ENCODE measurements at regions of chr1 and their contacts with region 1.

Region 1: GRCh38 chr1:115337633-115338456 is at the start of gene NGF:
- DNase-seq: peak; percentile 63 to 82
- H3K4me3 ChIP-seq: peak within 1 kb of the TSS; percentile 55 to 83 (median 72)
- H3K27ac ChIP-seq: no peak within 1 kb of the TSS
- H3K4me1 ChIP-seq: peaks cover 0 to 7% (median 0%) of the 10 kb centered on the region in 4 experiments; a peak in 4 of 7 replicates
- H3K27me3 ChIP-seq: peaks cover 7 to 38% (median 29%) of the 10 kb centered on the region in 4 experiments
- CTCF ChIP-seq: no peak
- EP300 ChIP-seq: no peak
- POLR2A ChIP-seq: peak in 1 of 2 experiments; percentile 55; a peak in 1 of 3 replicates
- RAD21 ChIP-seq: no peak
- total RNA-seq, gene NGF: 0.63 TPM in 1 of 2 replicates, not detected in the other

Region 2: GRCh38 chr1:115356356-115356755 is 18.5 kb after region 1 on chr1:
- CTCF ChIA-PET with region 1: interaction called, 13 read pairs
- POLR2A ChIA-PET with region 1: no interaction called
- DNase-seq: no peak
- H3K4me3 ChIP-seq: no peak overlapping the region
- H3K27ac ChIP-seq: no peak overlapping the region
- H3K4me1 ChIP-seq: no peaks in the 10 kb centered on the region
- H3K27me3 ChIP-seq: no peaks in the 10 kb centered on the region
- CTCF ChIP-seq: no peak
- EP300 ChIP-seq: no peak
- POLR2A ChIP-seq: no peak
- RAD21 ChIP-seq: no peak

Region 3: DNA sequence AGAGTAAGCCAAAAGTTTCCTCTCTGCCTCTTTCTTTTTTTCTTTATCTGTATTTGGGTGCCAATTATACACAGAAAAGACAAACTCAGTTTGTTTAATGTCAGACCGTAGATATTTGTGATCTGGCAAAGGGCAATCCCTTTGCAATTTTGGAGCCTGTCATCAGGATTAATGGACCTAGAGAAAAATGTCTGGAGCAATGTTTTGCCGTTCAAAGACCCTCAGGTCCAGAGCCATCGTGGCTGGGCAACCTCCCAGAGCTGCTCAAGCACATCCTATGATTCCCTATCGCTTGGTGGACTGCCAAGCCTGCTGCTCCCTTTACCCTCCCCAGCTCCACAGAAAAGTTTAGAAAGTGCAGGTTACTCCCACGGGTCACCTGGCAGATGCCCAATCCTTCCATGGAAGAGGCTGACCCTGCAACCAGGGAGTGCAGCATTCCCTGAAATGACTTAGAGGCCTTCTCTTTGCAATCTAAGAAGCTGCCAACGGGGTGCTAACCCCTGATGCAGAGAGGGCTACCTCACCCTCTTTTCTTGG is 112.7 kb after region 1 on chr1:
- CTCF ChIA-PET with region 1: no interaction called
- POLR2A ChIA-PET with region 1: no interaction called
- DNase-seq: no peak
- H3K4me3 ChIP-seq: no peak overlapping the region
- H3K27ac ChIP-seq: no peak overlapping the region
- H3K4me1 ChIP-seq: no peaks in the 10 kb centered on the region
- H3K27me3 ChIP-seq: no peaks in the 10 kb centered on the region
- CTCF ChIP-seq: no peak
- EP300 ChIP-seq: no peak
- POLR2A ChIP-seq: no peak
- RAD21 ChIP-seq: no peak

Measured in H1 (cell line).